HCT116 (cell line): ENCODE measurements at regions of chr3 and their contacts with region 1.

Region 1: DNA sequence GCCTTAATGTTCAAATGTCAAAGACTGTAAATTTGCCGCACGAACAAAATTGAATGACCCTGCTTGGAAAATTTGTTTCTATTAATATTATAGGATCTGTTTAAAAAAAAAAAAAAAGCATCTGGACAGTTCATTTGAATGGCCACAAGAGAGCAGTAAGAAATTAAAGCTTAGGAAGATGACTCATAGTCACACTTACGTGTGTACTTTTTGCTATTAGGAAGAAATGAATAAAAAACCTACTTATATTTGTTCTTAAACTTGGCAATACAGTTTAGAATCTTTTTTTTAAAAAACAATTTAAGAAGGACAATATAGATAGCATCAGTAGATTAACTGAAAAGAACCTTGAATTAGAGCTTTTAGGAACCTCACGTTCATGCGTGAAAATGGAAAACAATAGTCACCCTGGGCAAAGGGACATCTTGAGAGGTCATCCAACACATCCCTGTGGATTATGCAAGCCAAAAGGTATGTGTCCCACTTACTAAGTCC is 621.8 kb downstream of the MECOM start:
- DNase-seq: peak; percentile 19
- ATAC-seq: peak; percentile 57
- H3K4me3 ChIP-seq: peak overlapping the region in 1 of 2 experiments; percentile 2; a peak in 1 of 4 replicates
- H3K27ac ChIP-seq: no peak overlapping the region
- H3K4me1 ChIP-seq: peaks cover 0 to 8% of the 10 kb centered on the region in 2 experiments; a peak in 1 of 4 replicates
- H3K27me3 ChIP-seq: no peaks in the 10 kb centered on the region
- CTCF ChIP-seq: peak; percentile 37 to 57 (median 42); a peak in 5 of 6 replicates
- POLR2A ChIP-seq: no peak
- RAD21 ChIP-seq: peak; percentile 63

Region 2: GRCh38 chr3:169020356-169020755 is 21.4 kb before region 1 on chr3:
- CTCF ChIA-PET with region 1: interaction called, 12 read pairs
- POLR2A ChIA-PET with region 1: no interaction called
- RAD21 ChIA-PET with region 1: no interaction called
- intact Hi-C with region 1: no loop called
- DNase-seq: no peak
- ATAC-seq: no peak
- H3K4me3 ChIP-seq: no peak overlapping the region
- H3K27ac ChIP-seq: no peak overlapping the region
- H3K4me1 ChIP-seq: no peaks in the 10 kb centered on the region
- H3K27me3 ChIP-seq: no peaks in the 10 kb centered on the region
- CTCF ChIP-seq: no peak
- POLR2A ChIP-seq: no peak
- RAD21 ChIP-seq: no peak

Region 3: GRCh38 chr3:169662132-169662842 is 620.6 kb after region 1 on chr3:
- CTCF ChIA-PET with region 1: no interaction called
- POLR2A ChIA-PET with region 1: no interaction called
- RAD21 ChIA-PET with region 1: no interaction called
- intact Hi-C with region 1: loop called (anchors 2 kb)
- DNase-seq: peak; percentile 24
- ATAC-seq: peak; percentile 82
- H3K4me3 ChIP-seq: peak overlapping the region; percentile 58 to 65
- H3K27ac ChIP-seq: no peak overlapping the region; the same call in 1 of the 2 replicates
- H3K4me1 ChIP-seq: peaks cover 0 to 23% of the 10 kb centered on the region in 2 experiments; a peak in 2 of 4 replicates
- H3K27me3 ChIP-seq: peaks cover 30% of the 10 kb centered on the region
- CTCF ChIP-seq: peak; percentile 35 to 65 (median 58)
- POLR2A ChIP-seq: no peak
- RAD21 ChIP-seq: peak; percentile 41